ENCODE measurements at regions of chr10 and their contacts with region 1.

Region 1: DNA sequence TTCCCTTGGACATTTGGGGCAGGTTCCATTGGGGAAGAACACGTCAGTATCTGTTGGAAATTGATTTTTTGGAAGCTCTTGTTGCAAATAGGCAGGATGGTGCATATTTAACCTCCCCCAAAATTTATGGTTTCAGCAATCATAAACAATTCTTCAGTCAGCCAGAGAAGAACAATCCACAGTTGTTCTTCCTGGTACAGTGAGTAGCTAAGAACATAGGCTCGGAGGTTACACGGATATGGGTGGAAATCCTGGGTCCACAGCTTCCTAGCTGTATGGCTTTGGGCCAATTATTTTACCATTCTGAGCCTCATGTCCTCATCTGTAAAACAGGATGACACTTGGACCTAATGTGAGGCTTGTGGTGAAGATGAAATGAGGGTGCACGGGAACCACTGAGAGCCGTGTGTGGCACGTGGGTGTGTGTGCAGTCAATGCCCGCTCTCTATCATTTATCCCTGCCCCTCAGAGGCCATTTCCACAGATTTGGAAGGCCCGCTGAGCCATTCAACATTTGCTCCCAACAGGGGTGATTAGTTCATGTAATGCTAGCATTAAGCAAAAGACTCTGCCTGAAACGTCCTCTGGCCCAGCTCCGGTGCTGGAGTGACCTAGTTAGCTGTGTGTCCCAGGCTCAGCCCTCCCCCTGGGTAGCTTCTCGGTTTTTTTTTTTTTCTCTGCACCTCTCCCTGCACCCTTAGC is 9.7 kb downstream of the CAMK1D start:
- DNase-seq: peak in 4 of 14 experiments; percentile 14 to 39 (median 23)
- ATAC-seq: peak; percentile 56
- H3K4me3 ChIP-seq: no peak overlapping the region
- H3K4me3 Mint-ChIP-seq: peak overlapping the region; percentile 40
- H3K27ac ChIP-seq: peak overlapping the region in 1 of 2 donors; percentile 9
- H3K27ac Mint-ChIP-seq: peak overlapping the region; percentile 13
- H3K4me1 ChIP-seq: peaks cover 18% of the 10 kb centered on the region
- H3K4me1 Mint-ChIP-seq: peaks cover 61% of the 10 kb centered on the region
- H3K27me3 ChIP-seq: no peaks in the 10 kb centered on the region
- H3K27me3 Mint-ChIP-seq: no peaks in the 10 kb centered on the region
- CTCF ChIP-seq: no peak

Region 2: GRCh38 chr10:12405342-12406320 is 46.6 kb after region 1 on chr10:
- CTCF ChIA-PET with region 1: no interaction called
- POLR2A ChIA-PET with region 1: no interaction called
- intact Hi-C with region 1: loop called in 1 of 2 experiments (anchors 5 kb)
- DNase-seq: no peak
- ATAC-seq: no peak
- H3K4me3 ChIP-seq: no peak overlapping the region
- H3K4me3 Mint-ChIP-seq: no peak overlapping the region
- H3K27ac ChIP-seq: no peak overlapping the region
- H3K27ac Mint-ChIP-seq: no peak overlapping the region
- H3K4me1 ChIP-seq: no peaks in the 10 kb centered on the region
- H3K4me1 Mint-ChIP-seq: peaks cover 31% of the 10 kb centered on the region
- H3K27me3 ChIP-seq: no peaks in the 10 kb centered on the region
- H3K27me3 Mint-ChIP-seq: no peaks in the 10 kb centered on the region
- CTCF ChIP-seq: no peak

Region 3: DNA sequence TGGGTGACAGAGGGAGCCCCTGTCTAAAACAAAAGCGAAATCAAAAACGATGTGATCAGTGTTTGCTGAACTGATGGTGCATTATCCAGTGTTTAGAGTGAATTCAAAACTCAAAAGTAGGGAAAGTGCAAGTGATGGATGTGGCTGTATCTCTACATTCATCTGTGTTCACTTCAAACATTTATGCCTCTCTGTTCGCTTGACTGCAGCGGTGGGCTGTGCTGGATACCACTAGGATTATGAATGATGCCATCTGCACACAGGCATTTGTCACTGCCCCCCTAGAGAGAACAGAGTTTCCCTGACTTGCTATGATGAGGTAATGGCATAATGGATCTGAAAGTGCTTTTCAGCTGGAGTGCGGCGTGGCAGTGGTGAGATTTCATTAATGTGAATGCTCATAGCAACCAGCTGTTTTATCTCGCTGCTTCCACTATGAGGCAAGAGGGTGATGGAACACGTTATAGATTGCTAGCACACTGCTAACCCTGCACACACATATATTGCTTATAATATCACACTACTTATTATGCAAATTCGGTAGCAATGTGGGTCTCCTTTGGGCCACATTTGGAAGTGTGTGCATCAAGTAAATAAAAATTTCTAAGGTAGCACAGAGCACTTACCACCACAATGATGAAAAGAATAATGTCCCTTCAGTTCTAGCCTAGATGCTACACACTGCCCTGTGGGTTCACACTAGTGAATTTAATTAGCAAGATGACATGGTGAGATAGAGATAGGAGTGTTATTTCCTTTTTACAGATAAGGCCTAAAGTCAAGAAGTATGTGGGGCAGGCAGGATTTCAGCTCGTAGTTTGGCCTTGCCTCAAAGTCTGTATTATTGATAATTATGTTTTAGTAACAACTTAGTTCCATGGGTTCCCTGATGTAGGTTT is 155.0 kb after region 1 on chr10:
- CTCF ChIA-PET with region 1: no interaction called
- POLR2A ChIA-PET with region 1: no interaction called
- intact Hi-C with region 1: no loop called
- DNase-seq: peak in 1 of 14 experiments; percentile 21
- ATAC-seq: no peak
- H3K4me3 ChIP-seq: no peak overlapping the region
- H3K4me3 Mint-ChIP-seq: no peak overlapping the region
- H3K27ac ChIP-seq: no peak overlapping the region
- H3K27ac Mint-ChIP-seq: peak overlapping the region; percentile 28
- H3K4me1 ChIP-seq: peaks cover 12% of the 10 kb centered on the region
- H3K4me1 Mint-ChIP-seq: peaks cover 56% of the 10 kb centered on the region
- H3K27me3 ChIP-seq: no peaks in the 10 kb centered on the region
- H3K27me3 Mint-ChIP-seq: no peaks in the 10 kb centered on the region
- CTCF ChIP-seq: no peak

Region 4: GRCh38 chr10:13787015-13787421 is 1428.0 kb after region 1 on chr10:
- CTCF ChIA-PET with region 1: no interaction called
- POLR2A ChIA-PET with region 1: no interaction called
- intact Hi-C with region 1: no loop called
- DNase-seq: peak; percentile 46 to 95 (median 66)
- ATAC-seq: peak; percentile 85
- H3K4me3 ChIP-seq: peak overlapping the region; percentile 32
- H3K4me3 Mint-ChIP-seq: peak overlapping the region; percentile 83
- H3K27ac ChIP-seq: peak overlapping the region; percentile 93 to 97
- H3K27ac Mint-ChIP-seq: no peak overlapping the region
- H3K4me1 ChIP-seq: peaks cover 67% of the 10 kb centered on the region
- H3K4me1 Mint-ChIP-seq: peaks cover 36% of the 10 kb centered on the region
- H3K27me3 ChIP-seq: no peaks in the 10 kb centered on the region
- H3K27me3 Mint-ChIP-seq: no peaks in the 10 kb centered on the region
- CTCF ChIP-seq: no peak

Measured in CD4-positive, alpha-beta T cell (primary cell).